H1 (cell line): ENCODE measurements at regions of chr3 and their contacts with region 1.

Region 1: DNA sequence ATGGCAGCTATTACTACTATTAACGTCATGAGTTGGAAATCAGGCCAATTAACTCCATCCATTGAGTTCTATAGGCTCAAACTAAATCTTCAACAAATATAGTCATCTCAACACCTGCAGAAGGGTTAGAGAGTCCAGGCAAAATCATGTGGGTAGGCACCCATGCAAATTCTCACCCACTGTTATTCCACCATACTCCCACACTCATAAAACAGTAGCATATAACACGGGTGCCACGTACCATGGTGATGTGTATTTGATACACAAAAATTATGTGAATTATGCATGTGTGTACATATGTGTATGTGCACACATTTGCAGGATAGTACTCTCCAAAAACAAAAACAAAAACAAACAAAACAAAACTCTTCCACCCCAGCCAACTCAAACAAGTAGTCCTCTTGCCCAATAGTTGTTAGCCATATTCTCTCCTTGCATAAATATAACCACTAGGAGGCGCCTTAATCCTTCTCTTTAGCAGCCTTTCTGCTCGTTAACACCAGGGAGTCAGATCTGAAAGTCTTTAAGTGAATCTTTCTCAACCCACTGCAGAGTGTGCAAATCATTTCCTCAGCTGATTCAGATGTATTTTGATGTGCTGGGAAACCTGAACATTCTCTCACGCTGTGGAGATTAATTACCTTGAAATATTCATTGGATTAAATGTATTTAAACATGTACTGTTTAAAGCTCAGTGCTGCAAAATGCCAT is 38.0 kb upstream of the COPB2 start:
- DNase-seq: no peak
- H3K4me3 ChIP-seq: no peak overlapping the region
- H3K27ac ChIP-seq: no peak overlapping the region
- H3K4me1 ChIP-seq: 0 out of 7 replicates have a peak, but pooled peaks cover 0 to 3% (median 0%) of the 10 kb centered on the region in 4 experiments
- H3K27me3 ChIP-seq: no peaks in the 10 kb centered on the region
- CTCF ChIP-seq: peak in 2 of 3 experiments; percentile 75 to 77; a peak in 3 of 4 replicates
- EP300 ChIP-seq: no peak
- POLR2A ChIP-seq: no peak
- RAD21 ChIP-seq: peak; percentile 90 to 96

Region 2: DNA sequence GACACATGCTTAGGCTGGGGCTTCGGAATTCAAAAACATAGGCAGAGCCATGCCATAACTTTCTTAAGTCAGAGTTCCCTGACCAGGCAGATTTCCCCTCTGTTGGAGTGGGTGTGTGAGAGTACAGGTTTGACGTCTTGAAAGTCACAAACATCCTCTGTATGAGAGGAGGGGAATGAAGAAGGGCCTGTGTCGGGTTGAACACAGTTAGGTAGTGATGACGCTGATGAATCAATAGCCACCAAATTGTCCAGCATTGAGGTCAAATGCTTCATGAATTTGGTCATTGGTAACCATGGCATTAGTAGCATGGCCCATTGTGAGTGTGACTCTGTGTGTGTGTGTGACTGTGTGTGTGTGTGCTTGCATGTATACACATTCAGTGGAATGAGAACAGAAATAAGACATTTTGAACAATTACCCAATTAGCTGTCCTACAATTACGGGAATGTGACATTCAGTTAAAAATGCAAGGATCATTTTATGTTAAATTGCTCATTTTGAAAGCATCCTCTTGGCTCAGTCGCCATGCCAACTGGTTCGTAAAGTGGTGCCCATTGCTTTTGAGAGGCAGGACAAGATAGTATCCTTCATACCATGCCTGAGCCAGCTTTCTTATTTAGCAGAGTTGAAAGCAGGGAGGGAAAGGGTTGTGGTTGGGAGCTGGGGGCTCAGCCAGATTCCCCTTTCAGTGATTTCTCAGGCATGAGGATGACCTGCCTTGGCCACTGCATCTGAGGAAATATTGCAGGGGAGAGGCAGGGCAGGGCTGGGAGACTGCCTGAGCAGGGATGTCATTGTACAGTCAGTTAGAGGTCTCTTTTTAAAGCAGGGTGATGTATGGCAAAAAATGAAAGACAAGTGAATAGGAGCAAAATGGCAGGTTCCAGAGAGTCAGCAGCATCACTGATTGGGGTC is 13.5 kb after region 1 on chr3:
- CTCF ChIA-PET with region 1: interaction called, 26 read pairs
- POLR2A ChIA-PET with region 1: no interaction called
- DNase-seq: no peak
- H3K4me3 ChIP-seq: no peak overlapping the region
- H3K27ac ChIP-seq: no peak overlapping the region
- H3K4me1 ChIP-seq: no peaks in the 10 kb centered on the region
- H3K27me3 ChIP-seq: no peaks in the 10 kb centered on the region
- CTCF ChIP-seq: no peak
- EP300 ChIP-seq: no peak
- POLR2A ChIP-seq: no peak
- RAD21 ChIP-seq: no peak

Region 3: DNA sequence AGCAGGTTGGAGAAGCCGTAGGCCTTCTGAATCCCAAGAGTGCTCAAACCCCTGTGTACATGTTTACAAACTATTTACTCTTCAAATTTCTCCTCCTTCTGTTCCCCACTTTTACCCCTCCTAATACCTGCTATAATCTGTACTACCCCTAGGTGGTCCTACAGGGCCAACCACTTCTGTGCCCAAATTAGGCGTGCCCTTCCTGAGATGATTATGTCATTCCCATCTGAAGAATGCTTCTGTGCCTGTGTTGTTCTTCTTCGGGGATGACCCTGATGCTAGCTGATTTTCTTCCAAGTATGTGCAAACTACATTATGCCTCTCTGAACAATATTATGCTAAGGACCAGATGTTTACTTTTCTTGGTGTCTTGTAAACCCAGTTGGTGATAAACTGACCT is 28.4 kb after region 1 on chr3:
- CTCF ChIA-PET with region 1: interaction called, 15 read pairs
- POLR2A ChIA-PET with region 1: no interaction called
- DNase-seq: no peak
- H3K4me3 ChIP-seq: no peak overlapping the region
- H3K27ac ChIP-seq: no peak overlapping the region
- H3K4me1 ChIP-seq: peaks cover 16 to 25% (median 20%) of the 10 kb centered on the region in 4 experiments
- H3K27me3 ChIP-seq: no peaks in the 10 kb centered on the region
- CTCF ChIP-seq: peak in 2 of 3 experiments; percentile 34 to 45; a peak in 2 of 4 replicates
- EP300 ChIP-seq: no peak
- POLR2A ChIP-seq: no peak
- RAD21 ChIP-seq: peak; percentile 45 to 52

Region 4: DNA sequence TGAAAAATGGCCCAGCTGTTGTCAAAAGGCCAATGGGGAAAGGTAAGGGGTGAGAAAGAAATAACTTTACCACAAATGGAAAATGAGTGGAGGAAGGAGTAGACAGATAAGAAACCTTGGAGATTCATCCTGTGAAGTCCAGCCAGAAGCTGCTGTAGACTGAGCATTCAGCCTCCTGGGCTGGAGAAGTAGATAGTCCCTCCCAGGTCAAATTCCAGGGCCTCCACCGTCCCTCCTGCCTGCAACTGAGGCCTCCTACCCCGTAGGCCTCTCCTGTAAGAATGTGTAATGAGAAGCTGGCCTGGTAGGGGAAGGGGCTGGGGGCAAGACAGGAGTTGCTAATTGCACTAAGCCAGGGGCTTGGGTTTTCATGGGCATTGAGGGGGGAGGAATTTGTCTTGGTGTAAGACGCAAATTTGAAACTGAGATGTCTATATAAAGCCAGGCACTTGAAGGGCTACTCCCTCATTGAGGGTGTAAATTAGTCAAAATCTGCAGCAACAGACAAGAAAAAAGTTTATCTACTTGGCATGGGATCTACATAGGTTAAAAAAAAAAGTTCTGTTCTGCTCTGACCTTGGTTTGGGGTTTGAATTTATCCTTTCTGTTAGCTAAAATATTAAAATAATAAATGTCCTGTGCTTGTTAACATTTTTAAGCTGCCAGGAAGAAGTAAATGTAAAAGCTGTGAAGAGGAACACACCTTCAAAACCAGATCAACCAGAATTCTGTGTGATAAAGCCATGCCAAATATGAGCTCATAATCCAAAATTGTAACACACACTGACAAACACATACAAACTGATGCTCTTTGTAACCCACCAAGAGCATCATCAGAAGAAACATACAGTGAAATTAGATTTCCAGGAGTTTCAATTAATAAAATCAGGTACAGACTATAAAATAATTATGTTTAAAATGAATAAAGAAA is 50.5 kb after region 1 on chr3:
- CTCF ChIA-PET with region 1: interaction called, 11 read pairs
- POLR2A ChIA-PET with region 1: interaction called, 3 read pairs
- DNase-seq: peak in 1 of 2 experiments; percentile 26
- H3K4me3 ChIP-seq: no peak overlapping the region
- H3K27ac ChIP-seq: no peak overlapping the region
- H3K4me1 ChIP-seq: peaks cover 0 to 5% (median 1%) of the 10 kb centered on the region in 4 experiments; a peak in 2 of 7 replicates
- H3K27me3 ChIP-seq: no peaks in the 10 kb centered on the region
- CTCF ChIP-seq: no peak
- EP300 ChIP-seq: no peak
- POLR2A ChIP-seq: no peak
- RAD21 ChIP-seq: no peak

Region 5: DNA sequence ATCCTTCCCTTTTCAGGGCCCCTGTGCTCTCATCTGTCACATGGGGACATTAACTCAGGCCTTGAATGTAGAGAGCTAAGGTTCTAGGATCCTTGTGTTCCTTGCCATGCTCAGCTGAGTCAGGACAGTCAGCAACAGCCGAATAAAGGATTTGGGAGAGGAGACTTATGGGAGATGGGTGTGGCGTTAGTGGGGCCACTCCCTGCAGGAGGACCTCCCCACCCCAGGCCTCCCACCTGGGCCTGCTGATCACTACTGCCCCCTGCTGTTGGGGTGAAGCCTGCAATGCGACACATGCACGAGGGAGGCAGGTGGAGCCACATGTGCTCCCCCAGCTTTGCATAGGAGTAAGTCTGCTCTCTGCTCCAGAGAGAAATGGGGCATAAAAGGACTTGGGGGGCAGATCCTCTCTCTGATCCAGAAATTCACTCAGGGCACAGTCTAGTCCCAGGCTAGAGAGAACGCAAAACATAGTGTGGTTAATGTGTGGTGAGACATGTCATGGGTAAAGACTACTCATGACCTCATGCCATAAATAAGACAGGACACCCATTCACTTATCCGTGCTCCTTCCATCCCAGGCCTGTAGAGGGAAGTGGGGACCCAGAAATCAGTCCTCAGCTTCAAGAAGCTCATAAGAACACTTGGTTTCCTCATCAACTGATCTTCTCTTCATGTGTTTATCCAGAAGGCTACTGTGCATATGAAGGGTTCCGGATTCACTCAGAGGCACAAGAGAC is 92.7 kb after region 1 on chr3:
- CTCF ChIA-PET with region 1: interaction called, 58 read pairs
- POLR2A ChIA-PET with region 1: no interaction called
- DNase-seq: peak in 1 of 2 experiments; percentile 80
- H3K4me3 ChIP-seq: no peak overlapping the region
- H3K27ac ChIP-seq: no peak overlapping the region
- H3K4me1 ChIP-seq: peaks cover 0 to 9% (median 6%) of the 10 kb centered on the region in 4 experiments; a peak in 4 of 7 replicates
- H3K27me3 ChIP-seq: peaks cover 0 to under 1% (median 0%) of the 10 kb centered on the region in 4 experiments; a peak in 3 of 7 replicates
- CTCF ChIP-seq: peak; percentile 67 to 84 (median 77)
- EP300 ChIP-seq: no peak
- POLR2A ChIP-seq: no peak
- RAD21 ChIP-seq: peak; percentile 56 to 67

Region 6: DNA sequence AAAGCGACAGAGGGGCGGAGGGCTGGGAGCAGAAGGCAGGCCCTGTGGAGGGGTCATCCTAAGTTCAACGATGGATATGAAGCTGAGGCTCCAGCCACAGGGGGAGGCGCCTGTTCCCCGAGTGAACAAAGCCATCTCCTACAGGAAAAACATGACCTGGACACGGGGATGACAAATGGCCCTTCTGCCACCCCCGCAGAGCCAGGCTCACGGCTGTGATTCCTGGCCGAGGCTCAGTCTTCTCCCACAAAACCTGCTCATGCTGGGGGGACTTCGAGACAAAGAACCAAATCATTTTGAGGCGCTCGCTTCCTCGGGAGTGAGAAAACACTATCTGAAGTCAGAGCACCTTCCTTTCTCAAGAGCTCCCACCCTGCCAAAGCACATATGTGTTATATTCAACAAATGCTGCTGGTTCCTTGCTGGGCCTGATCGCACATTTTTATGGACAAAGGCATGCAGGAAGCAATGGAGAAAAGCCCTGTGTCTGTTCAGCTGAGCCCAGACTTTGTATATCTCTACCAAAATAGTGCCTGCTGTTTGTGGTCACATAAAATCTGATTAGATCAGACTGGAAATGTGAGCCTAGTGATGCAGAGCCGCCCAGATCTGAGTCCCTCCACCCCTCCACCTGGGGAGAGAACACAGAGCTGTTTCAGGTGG is 106.5 kb after region 1 on chr3:
- CTCF ChIA-PET with region 1: interaction called, 14 read pairs
- POLR2A ChIA-PET with region 1: no interaction called
- DNase-seq: no peak
- H3K4me3 ChIP-seq: no peak overlapping the region
- H3K27ac ChIP-seq: no peak overlapping the region
- H3K4me1 ChIP-seq: peaks cover 2 to 22% (median 21%) of the 10 kb centered on the region in 4 experiments
- H3K27me3 ChIP-seq: peaks cover 0 to 15% (median 11%) of the 10 kb centered on the region in 4 experiments; a peak in 4 of 7 replicates
- CTCF ChIP-seq: no peak
- EP300 ChIP-seq: no peak
- POLR2A ChIP-seq: no peak
- RAD21 ChIP-seq: no peak

Region 7: GRCh38 chr3:139552632-139553365 is 125.4 kb after region 1 on chr3:
- CTCF ChIA-PET with region 1: interaction called, 116 read pairs
- POLR2A ChIA-PET with region 1: no interaction called
- DNase-seq: no peak
- H3K4me3 ChIP-seq: no peak overlapping the region
- H3K27ac ChIP-seq: no peak overlapping the region
- H3K4me1 ChIP-seq: no peaks in the 10 kb centered on the region
- H3K27me3 ChIP-seq: no peaks in the 10 kb centered on the region; a peak in 1 of 7 replicates
- CTCF ChIP-seq: peak in 2 of 3 experiments; percentile 0 to 31; a peak in 2 of 4 replicates
- EP300 ChIP-seq: no peak
- POLR2A ChIP-seq: no peak
- RAD21 ChIP-seq: peak; percentile 13 to 28; a peak in 2 of 4 replicates